ENCODE measurements at regions of chr7 and their contacts with region 1.

Region 1: GRCh38 chr7:43582503-43583423 is at the start of gene STK17A:
- DNase-seq: peak; percentile 83 to 99 (median 94)
- ATAC-seq: peak; percentile 96
- H3K4me3 ChIP-seq: peak within 1 kb of the TSS; percentile 86 to 90
- H3K27ac ChIP-seq: peak within 1 kb of the TSS; percentile 91 to 92
- H3K4me1 ChIP-seq: peaks cover 4 to 34% of the 10 kb centered on the region in 2 donors
- H3K27me3 ChIP-seq: peaks cover 7 to 13% of the 10 kb centered on the region in 2 donors
- CTCF ChIP-seq: peak; percentile 97
- polyA plus RNA-seq, gene STK17A: 25.9 to 34.5 (median 31.2) TPM

Region 2: DNA sequence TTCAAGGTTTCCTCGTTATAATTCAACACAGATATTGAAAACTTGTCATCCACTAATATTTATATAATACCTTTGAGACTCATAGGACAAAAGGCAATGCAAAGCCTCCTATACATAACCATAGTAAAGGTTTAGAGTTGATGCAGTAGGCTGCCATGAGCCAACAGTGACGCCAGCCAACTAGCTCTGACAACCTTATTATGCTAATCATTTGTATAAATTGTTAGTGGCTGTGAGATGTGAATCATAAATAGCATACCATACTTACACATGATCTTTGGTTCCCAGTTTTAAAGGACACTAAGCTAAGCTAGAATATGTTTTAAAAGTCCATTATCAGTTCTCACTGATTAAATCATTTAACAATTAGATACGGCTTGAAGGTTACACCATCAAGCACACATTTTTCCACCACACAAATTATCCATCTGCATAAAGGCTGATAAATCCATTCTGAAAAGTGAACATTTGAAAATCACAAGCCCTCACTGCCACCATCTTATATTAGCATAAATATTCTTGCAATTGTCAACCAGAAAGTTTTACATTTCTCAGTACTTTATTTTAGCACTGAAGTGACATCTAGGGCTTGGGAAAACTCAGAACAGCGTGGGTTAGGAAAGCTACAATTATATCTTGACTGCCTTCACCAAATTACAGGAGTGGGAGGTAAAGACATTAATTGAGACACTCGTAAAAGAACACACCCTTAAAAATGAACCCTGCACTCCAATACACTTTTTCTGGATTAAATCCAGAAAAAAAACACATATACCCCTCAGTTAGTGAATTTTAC is 115.9 kb after region 1 on chr7:
- intact Hi-C with region 1: loop called in 1 of 2 experiments (anchors 2 kb)
- DNase-seq: no peak
- ATAC-seq: no peak
- H3K4me3 ChIP-seq: no peak overlapping the region
- H3K27ac ChIP-seq: no peak overlapping the region
- H3K4me1 ChIP-seq: peaks cover 0 to 15% of the 10 kb centered on the region in 2 donors
- H3K27me3 ChIP-seq: no peaks in the 10 kb centered on the region
- CTCF ChIP-seq: no peak

Region 3: DNA sequence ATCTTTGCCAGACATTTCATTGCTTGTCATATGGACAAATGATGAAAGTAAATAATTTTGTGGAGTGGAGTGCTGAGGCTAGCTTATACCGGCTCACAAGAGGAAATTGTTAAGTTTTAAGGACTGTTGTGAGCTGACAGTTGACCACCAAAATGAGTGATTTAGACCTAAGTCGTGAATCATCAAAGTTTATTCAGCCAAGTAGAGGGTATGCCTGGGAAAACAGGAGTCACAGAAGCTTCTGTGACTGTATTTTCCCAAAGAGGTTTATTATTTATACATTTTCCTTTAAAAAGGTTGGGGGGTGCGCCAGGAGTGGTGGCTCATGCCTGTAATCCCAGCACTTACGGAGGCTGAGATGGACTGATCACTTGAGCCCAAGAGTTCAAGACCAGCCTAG is 264.7 kb after region 1 on chr7:
- intact Hi-C with region 1: loop called in 1 of 2 experiments (anchors 10 kb)
- DNase-seq: no peak
- ATAC-seq: no peak
- H3K4me3 ChIP-seq: no peak overlapping the region
- H3K27ac ChIP-seq: no peak overlapping the region
- H3K4me1 ChIP-seq: no peaks in the 10 kb centered on the region
- H3K27me3 ChIP-seq: no peaks in the 10 kb centered on the region
- CTCF ChIP-seq: no peak

Measured in left lung (tissue), 14 donors.